CD8-positive, alpha-beta memory T cell (primary cell): ENCODE measurements at regions of chr19 and their contacts with region 1.

Region 1: DNA sequence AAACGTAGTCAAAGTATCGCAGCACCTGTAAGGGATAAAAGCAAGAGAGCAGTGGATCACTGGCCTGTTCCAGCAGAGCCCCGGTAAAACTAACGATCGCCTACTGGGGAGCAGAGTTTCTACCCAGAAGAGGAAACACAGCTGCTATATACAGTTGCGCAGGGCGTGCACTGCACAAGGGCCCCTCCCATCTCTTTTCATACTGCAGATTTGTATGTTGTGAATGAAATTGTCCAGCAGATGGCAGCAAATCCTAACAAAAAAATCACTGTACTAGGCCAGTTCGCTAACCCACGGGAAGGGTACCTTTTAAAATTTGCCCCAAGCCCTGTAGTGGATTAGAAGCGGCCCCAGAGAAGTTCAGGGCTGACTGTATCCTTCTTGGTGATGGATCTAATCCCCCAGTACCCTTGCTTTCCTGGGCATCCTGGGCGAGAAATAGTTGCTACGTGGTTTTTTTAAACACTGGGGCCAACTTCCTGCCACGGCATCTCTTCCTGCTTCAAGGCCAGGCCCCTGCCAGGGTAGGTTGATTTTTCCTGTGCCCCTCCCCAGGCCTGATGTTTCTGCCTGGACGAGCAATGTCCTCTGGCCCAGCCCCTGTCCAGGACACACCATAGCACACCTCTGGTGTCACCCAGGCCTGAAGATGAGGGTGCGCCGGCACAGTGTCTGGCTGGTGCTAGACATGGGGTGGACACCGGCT is 127.0 kb downstream of the IER2 start:
- DNase-seq: peak; percentile 22 to 74 (median 64)
- H3K4me3 ChIP-seq: peak overlapping the region; percentile 40
- H3K4me3 Mint-ChIP-seq: peak overlapping the region in 6 of 7 donors; percentile 26 to 87 (median 62)
- H3K27ac ChIP-seq: no peak overlapping the region
- H3K27ac Mint-ChIP-seq: peak overlapping the region; percentile 15 to 89 (median 80)
- H3K4me1 ChIP-seq: peaks cover 9% of the 10 kb centered on the region
- H3K4me1 Mint-ChIP-seq: peaks cover 16 to 27% (median 24%) of the 10 kb centered on the region in 3 donors
- H3K27me3 ChIP-seq: peaks cover 3% of the 10 kb centered on the region
- H3K27me3 Mint-ChIP-seq: peaks cover 5 to 11% of the 10 kb centered on the region in 2 donors

Region 2: DNA sequence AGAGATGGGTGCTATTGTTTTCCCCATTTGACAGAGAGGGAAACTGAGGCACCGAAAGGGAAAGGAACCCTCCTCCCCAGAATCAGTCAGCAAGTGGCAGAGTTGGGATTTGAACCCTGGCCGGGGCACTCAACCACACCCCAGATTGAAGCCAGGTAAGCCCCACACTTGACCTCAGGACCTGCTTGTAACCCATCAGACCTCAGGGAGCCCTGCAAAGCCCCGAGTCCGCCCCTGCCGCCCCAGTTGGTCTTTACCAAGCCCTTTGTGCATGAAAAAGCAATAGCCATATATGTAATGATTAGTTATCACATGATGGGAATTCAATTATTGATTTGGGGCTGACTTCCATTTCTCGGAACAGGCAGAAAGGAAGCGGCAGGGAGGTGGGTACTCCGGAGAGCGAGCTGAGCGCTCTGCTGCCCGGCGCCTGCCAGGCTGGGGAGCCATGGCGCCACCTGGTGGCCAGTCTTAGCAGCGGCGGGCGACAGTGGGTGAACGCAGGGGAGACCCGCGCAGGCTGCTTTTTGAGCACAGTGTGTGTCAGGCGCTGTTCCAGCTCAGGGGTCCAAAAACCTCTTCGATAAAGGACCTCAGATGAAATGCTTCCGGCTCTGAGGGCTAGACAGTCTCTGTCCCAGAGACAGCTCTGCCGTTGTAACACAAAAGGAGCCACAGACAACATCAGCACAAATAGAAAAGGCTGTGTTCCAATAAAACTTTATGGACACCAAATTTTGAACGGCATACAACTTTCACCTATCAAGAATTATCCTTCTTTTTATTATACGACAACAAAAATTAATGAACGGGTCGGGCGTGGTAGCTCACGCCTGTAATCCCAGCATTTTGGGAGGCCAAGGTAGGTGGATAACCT is 311.9 kb after region 1 on chr19:
- CTCF ChIA-PET with region 1: interaction called, 39 read pairs
- POLR2A ChIA-PET with region 1: interaction called, 3 read pairs
- DNase-seq: peak; percentile 67 to 80 (median 72)
- H3K4me3 ChIP-seq: peak overlapping the region; percentile 27
- H3K4me3 Mint-ChIP-seq: no peak overlapping the region
- H3K27ac ChIP-seq: no peak overlapping the region
- H3K27ac Mint-ChIP-seq: peak overlapping the region in 1 of 8 donors; percentile 70
- H3K4me1 ChIP-seq: no peaks in the 10 kb centered on the region
- H3K4me1 Mint-ChIP-seq: peaks cover 0 to 4% (median 0%) of the 10 kb centered on the region in 3 donors
- H3K27me3 ChIP-seq: no peaks in the 10 kb centered on the region
- H3K27me3 Mint-ChIP-seq: peaks cover 11 to 42% of the 10 kb centered on the region in 2 donors